Mammary epithelial cell (primary cell): ENCODE measurements at regions of chr16 and their contacts with region 1.

Region 1: DNA sequence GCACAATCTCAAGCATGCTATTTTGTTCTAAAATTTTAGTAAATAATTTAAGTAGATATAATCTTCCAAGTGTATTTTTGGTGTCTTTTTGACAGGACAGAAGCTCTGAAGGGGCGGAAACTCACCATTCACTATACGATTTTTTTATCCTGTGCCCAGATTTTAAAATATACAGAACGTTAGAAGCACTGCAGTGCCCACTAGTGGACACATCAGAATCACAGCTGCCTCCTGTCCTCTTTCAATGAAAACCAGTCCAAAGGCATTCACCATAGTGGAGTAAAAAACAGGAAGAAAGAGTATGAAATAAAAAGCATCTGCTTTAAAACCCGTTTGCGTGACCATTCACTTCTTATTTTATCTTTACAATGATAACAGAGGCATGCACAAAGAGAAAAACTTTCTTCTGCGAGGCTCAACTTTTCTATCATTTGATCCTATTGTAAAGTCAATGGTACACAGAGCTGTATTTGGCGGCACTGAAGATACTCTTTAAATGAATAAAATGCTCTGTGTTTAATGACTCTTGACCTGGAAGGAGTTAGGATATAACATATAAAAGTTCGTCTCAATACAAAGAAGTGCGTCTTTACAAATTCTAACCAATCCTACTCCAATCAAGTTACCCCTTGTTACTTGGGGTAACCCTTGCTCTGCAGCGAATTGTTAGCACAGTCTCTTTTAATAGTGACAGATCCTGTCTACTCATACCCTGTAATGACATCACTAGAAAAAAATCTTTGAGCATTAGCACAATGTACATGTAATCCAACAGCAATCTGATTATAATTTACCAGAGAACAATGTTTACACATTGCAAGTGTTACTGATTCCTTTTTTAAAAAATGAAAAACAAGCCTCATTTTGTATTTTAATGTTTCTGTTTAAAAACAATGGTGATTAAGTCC is 339.8 kb upstream of the PSMD7 start:
- DNase-seq: peak; percentile 17
- H3K4me3 ChIP-seq: no peak overlapping the region
- H3K27ac ChIP-seq: no peak overlapping the region
- H3K4me1 ChIP-seq: no peaks in the 10 kb centered on the region
- H3K27me3 ChIP-seq: peaks cover 2% of the 10 kb centered on the region
- CTCF ChIP-seq: peak; percentile 86 to 91

Region 2: GRCh38 chr16:73196670-73197069 is 760.2 kb before region 1 on chr16:
- CTCF ChIA-PET with region 1: no interaction called
- dilution Hi-C with region 1: no loop called
- in situ Hi-C with region 1: no loop called
- intact Hi-C with region 1: loop called (anchors 5 kb)
- DNase-seq: peak; percentile 43
- H3K4me3 ChIP-seq: no peak overlapping the region
- H3K27ac ChIP-seq: no peak overlapping the region
- H3K4me1 ChIP-seq: no peaks in the 10 kb centered on the region
- H3K27me3 ChIP-seq: no peaks in the 10 kb centered on the region
- CTCF ChIP-seq: peak; percentile 81 to 87

Region 3: GRCh38 chr16:73565262-73565661 is 391.6 kb before region 1 on chr16:
- CTCF ChIA-PET with region 1: no interaction called
- dilution Hi-C with region 1: no loop called
- in situ Hi-C with region 1: no loop called
- intact Hi-C with region 1: loop called (anchors 1 kb)
- DNase-seq: no peak
- H3K4me3 ChIP-seq: no peak overlapping the region
- H3K27ac ChIP-seq: no peak overlapping the region
- H3K4me1 ChIP-seq: no peaks in the 10 kb centered on the region
- H3K27me3 ChIP-seq: no peaks in the 10 kb centered on the region
- CTCF ChIP-seq: peak in 1 of 2 donors; percentile 24

Region 4: GRCh38 chr16:73713778-73714495 is 242.9 kb before region 1 on chr16:
- CTCF ChIA-PET with region 1: no interaction called
- dilution Hi-C with region 1: no loop called
- in situ Hi-C with region 1: no loop called
- intact Hi-C with region 1: loop called (anchors 1 kb)
- DNase-seq: peak; percentile 16
- H3K4me3 ChIP-seq: no peak overlapping the region
- H3K27ac ChIP-seq: no peak overlapping the region
- H3K4me1 ChIP-seq: no peaks in the 10 kb centered on the region
- H3K27me3 ChIP-seq: no peaks in the 10 kb centered on the region
- CTCF ChIP-seq: peak; percentile 38 to 68

Region 5: GRCh38 chr16:74169687-74170376 is 213.0 kb after region 1 on chr16:
- CTCF ChIA-PET with region 1: no interaction called
- dilution Hi-C with region 1: no loop called
- in situ Hi-C with region 1: no loop called
- intact Hi-C with region 1: no loop called
- DNase-seq: no peak
- H3K4me3 ChIP-seq: peak overlapping the region in 2 of 3 experiments; percentile 21 to 34
- H3K27ac ChIP-seq: no peak overlapping the region
- H3K4me1 ChIP-seq: no peaks in the 10 kb centered on the region
- H3K27me3 ChIP-seq: no peaks in the 10 kb centered on the region
- CTCF ChIP-seq: no peak

Region 6: DNA sequence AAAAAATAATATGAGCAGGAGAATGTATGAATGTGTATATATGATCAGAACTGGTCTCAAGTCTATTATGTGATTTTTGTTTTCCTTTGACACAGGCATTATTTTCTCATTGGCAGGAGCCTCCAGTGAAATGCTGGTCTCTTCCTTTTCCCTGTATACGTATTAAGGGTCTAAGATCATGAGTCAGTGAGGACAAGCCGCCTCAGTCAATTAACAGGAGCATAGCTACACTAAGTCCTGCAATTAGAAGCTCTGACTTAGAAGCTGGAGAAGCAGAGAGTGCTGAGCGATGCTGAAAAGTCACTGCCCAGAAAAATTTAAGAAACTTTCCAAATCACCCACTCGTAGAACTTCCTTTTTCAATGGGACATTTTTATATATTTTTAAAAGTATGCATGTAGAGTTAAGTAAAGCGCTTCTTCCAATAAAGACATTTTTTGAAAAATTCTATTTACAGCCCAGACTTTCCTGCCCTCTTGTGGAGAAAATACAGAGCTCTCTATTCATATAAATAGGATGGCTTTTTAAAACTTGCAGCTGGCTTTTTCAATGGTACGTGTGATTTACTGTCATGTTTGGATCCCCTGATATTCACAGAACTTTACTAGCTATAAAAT is 269.6 kb after region 1 on chr16:
- CTCF ChIA-PET with region 1: no interaction called
- dilution Hi-C with region 1: no loop called
- in situ Hi-C with region 1: no loop called
- intact Hi-C with region 1: loop called (anchors 1 kb)
- DNase-seq: no peak
- H3K4me3 ChIP-seq: no peak overlapping the region
- H3K27ac ChIP-seq: no peak overlapping the region
- H3K4me1 ChIP-seq: no peaks in the 10 kb centered on the region
- H3K27me3 ChIP-seq: peaks cover 2% of the 10 kb centered on the region
- CTCF ChIP-seq: peak; percentile 24 to 52

Region 7: DNA sequence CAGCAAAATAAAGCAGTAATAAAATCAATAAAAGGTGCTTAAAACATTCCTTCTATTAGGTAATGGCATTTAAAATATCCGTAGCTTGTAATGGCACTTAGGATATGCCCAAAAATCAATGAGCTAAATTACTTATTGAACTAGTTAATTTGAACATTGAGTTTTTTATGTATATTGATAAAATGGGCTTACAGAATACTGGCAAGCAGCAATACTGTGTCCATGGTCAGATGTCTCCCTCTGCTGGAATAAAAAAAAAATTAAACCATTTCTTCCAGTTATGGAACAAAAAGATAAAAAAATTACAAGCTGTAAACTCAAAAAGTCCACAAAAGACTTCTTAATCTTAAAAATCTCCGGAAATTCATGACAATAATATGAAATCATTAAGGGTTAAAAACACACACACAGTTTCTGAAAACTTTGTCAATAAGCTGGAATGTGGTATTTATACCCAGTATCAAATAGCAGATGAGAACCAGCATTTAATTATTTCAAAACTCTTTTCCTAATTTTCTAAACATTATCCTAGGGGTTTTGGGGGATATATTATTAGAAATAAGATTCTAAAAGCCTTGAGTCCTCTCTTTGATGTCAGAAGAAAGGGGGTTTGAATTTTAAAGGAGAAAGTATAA is 318.3 kb after region 1 on chr16:
- CTCF ChIA-PET with region 1: no interaction called
- dilution Hi-C with region 1: no loop called
- in situ Hi-C with region 1: no loop called
- intact Hi-C with region 1: loop called (anchors 5 kb)
- DNase-seq: no peak
- H3K4me3 ChIP-seq: no peak overlapping the region
- H3K27ac ChIP-seq: no peak overlapping the region
- H3K4me1 ChIP-seq: no peaks in the 10 kb centered on the region
- H3K27me3 ChIP-seq: no peaks in the 10 kb centered on the region
- CTCF ChIP-seq: peak; percentile 42 to 65

Region 8: DNA sequence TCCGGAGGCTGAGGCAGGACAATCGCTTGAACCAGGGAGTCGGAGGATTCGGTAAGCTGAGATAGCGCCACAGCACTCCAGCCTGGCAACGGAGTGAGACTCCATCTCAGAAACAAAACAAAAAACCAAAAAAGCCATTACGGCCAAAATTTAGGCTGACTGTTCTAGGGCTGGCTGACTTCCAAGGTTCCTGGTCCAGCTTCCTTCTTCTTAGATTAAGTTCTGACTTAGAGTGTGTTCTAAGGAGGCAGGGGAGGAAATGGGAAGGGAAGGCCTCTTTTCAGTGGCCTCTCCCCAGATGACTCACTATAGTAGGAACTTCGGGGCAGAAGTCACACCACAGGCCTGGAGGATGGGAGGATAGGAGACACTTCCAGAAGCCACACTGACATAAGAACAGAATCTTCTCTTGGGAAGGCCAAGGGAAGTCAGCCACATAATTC is 492.2 kb after region 1 on chr16:
- CTCF ChIA-PET with region 1: no interaction called
- dilution Hi-C with region 1: no loop called
- in situ Hi-C with region 1: no loop called
- intact Hi-C with region 1: no loop called
- DNase-seq: peak; percentile 81
- H3K4me3 ChIP-seq: no peak overlapping the region
- H3K27ac ChIP-seq: peak overlapping the region; percentile 82
- H3K4me1 ChIP-seq: peaks cover 36% of the 10 kb centered on the region
- H3K27me3 ChIP-seq: no peaks in the 10 kb centered on the region
- CTCF ChIP-seq: no peak